ENCODE measurements at regions of chr1 and their contacts with region 1.

Region 1: GRCh38 chr1:37064039-37064438 is 29.7 kb upstream of the GRIK3 start:
- DNase-seq: peak in 2 of 10 donors; percentile 37 to 38
- H3K4me3 ChIP-seq: no peak overlapping the region
- H3K27ac ChIP-seq: peak overlapping the region in 54 of 59 donors; percentile 18 to 88 (median 76)
- H3K27me3 ChIP-seq: peaks cover 0 to 6% (median 0%) of the 10 kb centered on the region in 45 donors
- CTCF ChIP-seq: no peak

Region 2: GRCh38 chr1:37338658-37339057 is 274.6 kb after region 1 on chr1:
- intact Hi-C with region 1: loop called in 1 of 2 experiments (anchors 10 kb)
- DNase-seq: peak in 9 of 10 donors; percentile 35 to 79 (median 66)
- H3K4me3 ChIP-seq: no peak overlapping the region
- H3K27ac ChIP-seq: peak overlapping the region in 30 of 59 donors; percentile 11 to 76 (median 44)
- H3K27me3 ChIP-seq: no peaks in the 10 kb centered on the region
- CTCF ChIP-seq: peak in 7 of 56 donors; percentile 8 to 40 (median 18)

Measured in dorsolateral prefrontal cortex (tissue), 120 donors.